HCT116 (cell line): ENCODE measurements at regions of chr18 and their contacts with region 1.

Region 1: DNA sequence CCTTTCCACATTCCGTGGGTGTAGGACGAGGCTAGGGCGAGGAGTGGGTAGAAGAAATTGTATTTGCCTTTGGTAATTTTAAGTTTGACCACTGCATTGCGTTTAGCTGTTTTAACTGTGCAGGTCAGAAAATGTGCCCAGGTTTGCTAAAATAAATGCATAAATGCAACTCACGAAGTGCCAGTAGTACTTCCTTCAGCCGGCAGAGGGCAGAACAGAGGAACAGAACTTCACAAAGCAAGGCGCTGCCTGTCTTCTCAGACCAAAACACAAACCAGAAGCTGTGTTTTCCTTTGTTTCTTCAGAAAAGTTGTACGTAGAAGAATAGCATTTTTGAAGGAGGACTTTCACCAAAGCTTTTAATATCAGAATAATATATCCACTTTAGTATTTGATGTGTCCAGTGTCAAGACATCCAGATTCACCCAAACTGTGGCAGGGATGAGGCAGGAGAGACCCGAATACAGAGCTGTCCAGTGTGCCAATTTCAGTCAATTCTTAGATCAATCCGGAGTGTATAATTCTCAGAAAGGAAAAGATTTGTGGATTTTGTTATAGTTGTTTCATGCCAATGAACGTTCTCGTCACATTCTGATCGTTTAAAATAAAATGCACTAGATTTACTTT is 348.6 kb downstream of the DLGAP1 start:
- DNase-seq: peak; percentile 42
- ATAC-seq: peak; percentile 63
- H3K4me3 ChIP-seq: no peak overlapping the region
- H3K27ac ChIP-seq: no peak overlapping the region
- H3K4me1 ChIP-seq: no peaks in the 10 kb centered on the region
- H3K27me3 ChIP-seq: no peaks in the 10 kb centered on the region
- CTCF ChIP-seq: peak; percentile 13 to 87 (median 85); a peak in 4 of 6 replicates
- POLR2A ChIP-seq: no peak
- RAD21 ChIP-seq: peak; percentile 47; the same call in 1 of the 2 replicates

Region 2: GRCh38 chr18:4096486-4096885 is 10.0 kb before region 1 on chr18:
- CTCF ChIA-PET with region 1: interaction called, 10 read pairs
- POLR2A ChIA-PET with region 1: no interaction called
- RAD21 ChIA-PET with region 1: no interaction called
- intact Hi-C with region 1: no loop called
- DNase-seq: no peak
- ATAC-seq: no peak
- H3K4me3 ChIP-seq: no peak overlapping the region
- H3K27ac ChIP-seq: no peak overlapping the region
- H3K4me1 ChIP-seq: no peaks in the 10 kb centered on the region
- H3K27me3 ChIP-seq: no peaks in the 10 kb centered on the region
- CTCF ChIP-seq: no peak
- POLR2A ChIP-seq: no peak
- RAD21 ChIP-seq: no peak

Region 3: DNA sequence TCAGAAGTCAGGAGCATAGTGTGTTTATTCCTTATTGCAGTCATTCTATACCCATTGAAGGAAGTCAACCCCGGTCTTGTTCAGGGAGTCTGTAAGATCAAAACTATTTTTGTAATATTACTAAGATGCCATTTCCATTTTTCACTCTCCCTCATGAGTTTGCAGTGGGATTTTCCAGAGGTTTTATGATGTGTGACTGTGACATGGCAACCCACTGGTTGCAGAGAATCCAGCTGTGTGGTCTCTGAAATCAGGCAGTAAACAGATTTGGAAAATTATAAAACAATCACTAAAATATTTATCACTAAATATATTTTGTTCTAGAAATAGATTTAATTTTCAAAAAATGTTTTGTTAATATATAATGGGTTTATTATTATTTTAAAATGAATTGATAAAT is 310.5 kb after region 1 on chr18:
- CTCF ChIA-PET with region 1: no interaction called
- POLR2A ChIA-PET with region 1: no interaction called
- RAD21 ChIA-PET with region 1: no interaction called
- intact Hi-C with region 1: no loop called
- DNase-seq: no peak
- ATAC-seq: no peak
- H3K4me3 ChIP-seq: no peak overlapping the region
- H3K27ac ChIP-seq: no peak overlapping the region
- H3K4me1 ChIP-seq: no peaks in the 10 kb centered on the region
- H3K27me3 ChIP-seq: no peaks in the 10 kb centered on the region
- CTCF ChIP-seq: no peak
- POLR2A ChIP-seq: no peak
- RAD21 ChIP-seq: no peak

Region 4: GRCh38 chr18:5057386-5058348 is 951.1 kb after region 1 on chr18:
- CTCF ChIA-PET with region 1: interaction called, 5 read pairs
- POLR2A ChIA-PET with region 1: no interaction called
- RAD21 ChIA-PET with region 1: no interaction called
- intact Hi-C with region 1: loop called (anchors 1 kb)
- DNase-seq: peak; percentile 21
- ATAC-seq: peak; percentile 55
- H3K4me3 ChIP-seq: no peak overlapping the region
- H3K27ac ChIP-seq: no peak overlapping the region
- H3K4me1 ChIP-seq: no peaks in the 10 kb centered on the region
- H3K27me3 ChIP-seq: no peaks in the 10 kb centered on the region
- CTCF ChIP-seq: peak in 2 of 3 experiments; percentile 51 to 68; a peak in 4 of 6 replicates
- POLR2A ChIP-seq: no peak
- RAD21 ChIP-seq: peak; percentile 55